ENCODE measurements at regions of chr22 and their contacts with region 1.

Region 1: DNA sequence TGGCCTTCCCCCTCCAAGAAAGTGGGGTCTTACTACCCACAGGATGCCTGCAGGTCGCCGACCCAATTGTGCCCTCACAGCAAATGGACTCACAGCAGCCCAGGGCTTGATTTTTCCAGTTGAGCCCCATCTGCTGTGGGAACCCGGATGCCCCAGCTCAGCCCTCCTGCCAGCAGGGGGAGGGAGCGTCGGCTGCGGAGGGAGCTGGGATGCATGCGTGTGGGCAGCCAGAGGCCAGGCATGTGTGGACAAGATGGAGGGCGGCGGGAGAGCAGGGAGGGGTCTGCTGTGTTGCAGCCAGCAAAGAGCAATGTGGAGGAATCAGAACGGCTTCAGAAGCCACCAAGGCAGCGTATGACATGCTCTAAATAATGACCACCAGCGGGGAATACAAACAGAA is 41.0 kb upstream of the EIF3D start:
- DNase-seq: no peak
- ATAC-seq: no peak
- H3K4me3 ChIP-seq: no peak overlapping the region
- H3K27ac ChIP-seq: no peak overlapping the region
- H3K4me1 ChIP-seq: no peaks in the 10 kb centered on the region
- H3K27me3 ChIP-seq: peaks cover 0 to 39% (median 22%) of the 10 kb centered on the region in 7 donors
- CTCF ChIP-seq: peak in 6 of 9 donors; percentile 11 to 46 (median 24)

Region 2: GRCh38 chr22:34829485-34829884 is 1740.5 kb before region 1 on chr22:
- intact Hi-C with region 1: loop called in 1 of 10 experiments (anchors 10 kb)
- DNase-seq: no peak
- ATAC-seq: no peak
- H3K4me3 ChIP-seq: no peak overlapping the region
- H3K27ac ChIP-seq: no peak overlapping the region
- H3K4me1 ChIP-seq: peaks cover 0 to 7% (median 0%) of the 10 kb centered on the region in 9 donors
- H3K27me3 ChIP-seq: no peaks in the 10 kb centered on the region
- CTCF ChIP-seq: no peak